Left lung (tissue), 14 donors: ENCODE measurements at regions of chr14 and their contacts with region 1.

Region 1: GRCh38 chr14:73633116-73634010 is 11.4 kb upstream of the DNAL1 start:
- DNase-seq: peak; percentile 55 to 88 (median 68)
- ATAC-seq: peak; percentile 91
- H3K4me3 ChIP-seq: peak overlapping the region; percentile 54 to 58
- H3K27ac ChIP-seq: peak overlapping the region in 1 of 2 donors; percentile 13
- H3K4me1 ChIP-seq: peaks cover 5 to 15% of the 10 kb centered on the region in 2 donors
- H3K27me3 ChIP-seq: peaks cover 0 to 19% of the 10 kb centered on the region in 2 donors
- CTCF ChIP-seq: peak; percentile 81 to 88

Region 2: GRCh38 chr14:73503648-73504047 is 129.7 kb before region 1 on chr14:
- intact Hi-C with region 1: loop called in 1 of 2 experiments (anchors 5 kb)
- DNase-seq: no peak
- ATAC-seq: no peak
- H3K4me3 ChIP-seq: no peak overlapping the region
- H3K27ac ChIP-seq: no peak overlapping the region
- H3K4me1 ChIP-seq: no peaks in the 10 kb centered on the region
- H3K27me3 ChIP-seq: no peaks in the 10 kb centered on the region
- CTCF ChIP-seq: no peak